ENCODE measurements at regions of chr5 and their contacts with region 1.

Region 1: DNA sequence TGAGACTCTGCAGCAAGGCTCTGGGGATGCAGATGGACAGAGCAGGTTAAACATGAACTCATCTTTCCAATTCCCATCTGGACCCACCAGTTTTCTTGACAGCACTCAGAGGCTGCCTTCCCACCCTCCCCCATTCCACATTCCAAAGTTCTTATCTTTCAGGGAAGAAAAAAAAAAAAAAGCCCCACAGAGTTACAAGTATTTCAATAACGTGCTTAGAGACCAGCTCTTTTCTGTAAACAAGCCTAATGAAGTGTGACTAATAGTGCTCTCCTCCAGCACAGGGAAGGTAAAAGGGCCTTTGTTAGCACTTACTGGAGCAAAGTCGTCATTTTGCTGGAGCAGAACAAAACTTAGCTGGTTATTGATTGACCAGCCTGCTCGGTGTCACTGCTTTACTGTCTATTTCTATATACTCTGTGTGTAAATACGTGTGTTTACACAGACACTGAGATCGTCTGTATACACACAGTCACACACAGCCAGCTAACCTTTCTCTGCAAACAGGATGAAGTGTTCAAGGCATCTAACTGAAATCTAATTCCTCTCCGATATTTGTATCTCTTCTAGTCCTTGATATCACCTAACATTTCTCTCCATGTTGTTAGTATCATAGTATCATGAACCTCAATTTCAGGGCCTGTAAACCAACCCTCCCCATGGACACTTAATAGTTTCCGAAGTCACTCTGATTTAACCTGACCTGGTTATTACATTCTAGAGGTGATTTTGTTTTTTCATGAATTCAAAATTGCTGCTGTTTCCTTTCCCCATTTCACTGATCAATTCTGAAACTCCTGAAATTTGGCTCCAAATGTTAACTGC is 84.9 kb downstream of the ZNF608 start:
- DNase-seq: no peak
- H3K4me3 ChIP-seq: peak overlapping the region; percentile 27
- H3K27ac ChIP-seq: peak overlapping the region; percentile 4
- H3K4me1 ChIP-seq: peaks cover 66% of the 10 kb centered on the region
- CTCF ChIP-seq: no peak

Region 2: GRCh38 chr5:124561451-124561850 is 100.1 kb before region 1 on chr5:
- CTCF ChIA-PET with region 1: no interaction called
- POLR2A ChIA-PET with region 1: no interaction called
- intact Hi-C with region 1: no loop called
- DNase-seq: no peak
- H3K4me3 ChIP-seq: no peak overlapping the region
- H3K27ac ChIP-seq: no peak overlapping the region
- H3K4me1 ChIP-seq: no peaks in the 10 kb centered on the region
- CTCF ChIP-seq: no peak

Region 3: DNA sequence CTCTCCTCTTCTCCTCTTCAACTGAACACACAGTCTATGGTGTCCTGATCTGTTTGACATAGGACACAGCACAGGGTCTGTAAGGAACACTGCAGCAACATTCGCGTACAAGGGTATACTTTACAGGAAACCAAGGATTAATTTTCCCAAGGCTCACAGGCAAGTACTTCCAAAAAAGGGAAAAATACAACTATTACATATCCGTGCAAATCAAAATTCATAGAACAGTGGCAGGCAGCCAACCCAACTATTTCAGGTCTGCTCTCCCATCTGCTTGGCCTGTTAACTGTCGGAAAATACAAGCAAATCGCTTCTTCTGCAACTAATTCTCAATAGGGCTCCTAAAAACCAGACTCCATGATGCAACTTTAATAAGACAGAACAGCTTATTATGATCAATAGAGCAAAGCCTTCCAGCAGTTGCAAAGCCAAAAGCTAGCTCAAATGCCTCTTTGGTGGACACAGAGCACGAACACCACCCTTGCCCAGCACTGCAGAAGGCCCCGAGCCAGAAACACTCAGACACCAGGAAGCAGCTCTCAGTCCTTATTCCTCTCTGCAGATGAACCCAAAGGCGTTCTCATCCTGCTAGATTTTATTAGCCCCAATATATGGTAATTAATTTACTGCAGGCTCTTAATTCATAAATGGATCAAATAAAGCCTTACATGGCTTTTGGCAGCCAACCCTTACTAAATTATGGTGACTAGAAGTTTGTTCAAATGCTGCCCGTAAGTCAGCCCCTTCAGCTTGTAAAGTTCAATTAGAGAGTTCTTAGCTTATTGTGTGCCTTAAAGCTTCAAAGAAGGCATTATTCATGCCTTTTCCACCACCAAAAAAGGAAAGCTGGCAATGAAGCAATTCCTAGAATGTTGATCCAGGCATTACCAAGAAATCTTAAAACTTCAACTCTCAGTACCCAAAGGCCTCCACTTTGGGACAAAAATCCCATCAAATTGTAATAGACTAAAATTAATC is 16.1 kb after region 1 on chr5:
- CTCF ChIA-PET with region 1: interaction called, 3 read pairs
- POLR2A ChIA-PET with region 1: interaction called, 10 read pairs
- intact Hi-C with region 1: no loop called
- DNase-seq: no peak
- H3K4me3 ChIP-seq: no peak overlapping the region
- H3K27ac ChIP-seq: no peak overlapping the region
- H3K4me1 ChIP-seq: peaks cover 4% of the 10 kb centered on the region
- CTCF ChIP-seq: no peak

Region 4: GRCh38 chr5:124725040-124725434 is 63.5 kb after region 1 on chr5:
- CTCF ChIA-PET with region 1: no interaction called
- POLR2A ChIA-PET with region 1: interaction called, 13 read pairs
- intact Hi-C with region 1: no loop called
- DNase-seq: peak; percentile 83
- H3K4me3 ChIP-seq: peak overlapping the region; percentile 71
- H3K27ac ChIP-seq: peak overlapping the region; percentile 65
- H3K4me1 ChIP-seq: peaks cover 86% of the 10 kb centered on the region
- CTCF ChIP-seq: peak; percentile 85